A549 (cell line): ENCODE measurements at regions of chr7 and their contacts with region 1.

Region 1: DNA sequence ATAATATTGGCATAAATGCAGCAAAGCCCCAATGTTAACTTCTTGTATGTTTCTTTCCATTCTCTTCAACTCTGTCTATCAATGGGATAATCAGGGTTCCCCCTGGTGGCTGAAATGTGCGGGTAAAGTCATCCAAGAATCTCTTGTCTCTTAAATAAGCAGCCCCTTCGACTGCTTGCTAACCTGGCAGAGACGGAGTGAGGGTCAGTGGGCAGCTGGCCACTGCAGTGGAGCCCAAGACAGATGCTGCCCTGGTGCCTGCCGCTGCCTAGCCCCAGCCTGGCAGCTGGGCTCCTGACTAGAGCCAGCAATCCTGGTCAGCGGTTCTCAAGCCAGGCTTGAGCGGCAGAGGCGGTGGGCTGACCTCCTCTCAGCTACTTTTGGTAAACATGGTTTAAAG is 248.9 kb downstream of the COBL start:
- DNase-seq: peak; percentile 66 to 67
- ATAC-seq: peak; percentile 73 to 96
- H3K4me3 ChIP-seq: no peak overlapping the region
- H3K27ac ChIP-seq: peak overlapping the region in 1 of 2 experiments; percentile 54; a peak in 1 of 6 replicates
- H3K4me1 ChIP-seq: 0 out of 3 replicates have a peak, but pooled peaks cover 5% of the 10 kb centered on the region
- CTCF ChIP-seq: peak; percentile 79
- EP300 ChIP-seq: no peak
- POLR2A ChIP-seq: no peak
- RAD21 ChIP-seq: peak; percentile 85 to 87

Region 2: DNA sequence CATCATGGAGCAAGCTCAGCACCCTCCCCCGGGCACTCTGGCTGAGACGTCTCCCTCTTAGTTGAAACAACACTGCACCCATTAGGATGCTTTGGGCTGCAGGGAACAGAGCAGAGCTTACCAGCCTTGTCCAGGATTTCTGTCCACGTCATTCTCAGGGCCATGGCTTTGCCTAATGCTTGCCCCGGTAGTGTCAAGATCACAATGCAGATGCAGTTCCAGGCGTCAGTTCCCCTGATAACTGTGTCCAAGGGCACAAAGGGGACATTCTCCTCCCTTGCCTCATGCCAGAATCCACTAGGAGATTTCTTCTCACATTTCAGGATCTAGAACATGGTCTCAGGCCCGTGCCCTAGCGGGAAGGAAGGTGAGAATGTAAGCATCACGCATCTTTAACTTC is 267.9 kb before region 1 on chr7:
- CTCF ChIA-PET with region 1: interaction called, 10 read pairs
- POLR2A ChIA-PET with region 1: no interaction called
- DNase-seq: no peak
- ATAC-seq: no peak
- H3K4me3 ChIP-seq: no peak overlapping the region
- H3K27ac ChIP-seq: no peak overlapping the region
- H3K4me1 ChIP-seq: peaks cover 33% of the 10 kb centered on the region
- CTCF ChIP-seq: no peak
- EP300 ChIP-seq: no peak
- POLR2A ChIP-seq: no peak
- RAD21 ChIP-seq: no peak

Region 3: GRCh38 chr7:50821457-50821979 is 246.2 kb before region 1 on chr7:
- CTCF ChIA-PET with region 1: interaction called, 12 read pairs
- POLR2A ChIA-PET with region 1: no interaction called
- DNase-seq: peak in 1 of 2 experiments; percentile 84
- ATAC-seq: peak; percentile 65 to 74
- H3K4me3 ChIP-seq: no peak overlapping the region
- H3K27ac ChIP-seq: peak overlapping the region; percentile 62 to 77
- H3K4me1 ChIP-seq: peaks cover 51% of the 10 kb centered on the region
- CTCF ChIP-seq: no peak
- EP300 ChIP-seq: no peak
- POLR2A ChIP-seq: no peak
- RAD21 ChIP-seq: no peak

Region 4: GRCh38 chr7:51055039-51055840 is 12.5 kb before region 1 on chr7:
- CTCF ChIA-PET with region 1: interaction called, 28 read pairs
- POLR2A ChIA-PET with region 1: no interaction called
- DNase-seq: no peak
- ATAC-seq: no peak
- H3K4me3 ChIP-seq: no peak overlapping the region
- H3K27ac ChIP-seq: no peak overlapping the region
- H3K4me1 ChIP-seq: no peaks in the 10 kb centered on the region
- CTCF ChIP-seq: no peak
- EP300 ChIP-seq: no peak
- POLR2A ChIP-seq: no peak
- RAD21 ChIP-seq: no peak

Region 5: DNA sequence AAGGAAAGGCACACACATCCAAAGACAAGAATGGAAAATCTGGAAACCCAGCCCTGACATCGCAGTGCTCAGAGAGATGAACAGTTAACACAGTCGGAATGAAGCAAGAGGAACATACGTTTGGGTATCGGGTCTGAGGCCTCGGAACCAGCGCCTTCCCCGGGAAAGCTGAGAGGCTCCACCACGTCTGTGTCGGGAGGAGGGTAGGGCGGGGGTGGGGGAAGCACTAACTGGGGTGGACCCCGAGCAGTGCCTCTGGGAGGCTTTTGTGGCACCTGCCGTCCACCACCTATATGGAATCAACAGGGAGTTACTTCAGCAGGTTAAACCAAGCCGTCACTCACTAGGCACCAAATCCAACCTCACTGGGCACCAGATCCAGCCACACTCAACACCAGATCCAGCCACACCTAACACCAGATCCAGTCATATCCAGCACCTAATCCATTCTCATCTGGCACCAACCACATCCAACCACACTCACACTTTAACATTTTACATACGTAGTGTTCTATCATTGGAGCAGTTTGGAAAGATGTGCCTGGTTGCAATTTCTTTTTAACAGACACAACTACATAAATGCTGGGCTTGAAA is 15.3 kb after region 1 on chr7:
- CTCF ChIA-PET with region 1: interaction called, 21 read pairs
- POLR2A ChIA-PET with region 1: no interaction called
- DNase-seq: no peak
- ATAC-seq: no peak
- H3K4me3 ChIP-seq: no peak overlapping the region
- H3K27ac ChIP-seq: no peak overlapping the region
- H3K4me1 ChIP-seq: no peaks in the 10 kb centered on the region
- CTCF ChIP-seq: no peak
- EP300 ChIP-seq: no peak
- POLR2A ChIP-seq: no peak
- RAD21 ChIP-seq: no peak